ENCODE measurements at regions of chr2 and their contacts with region 1.

Region 1: GRCh38 chr2:71226965-71227560 is at the start of gene PAIP2B:
- DNase-seq: peak; percentile 99
- ATAC-seq: peak; percentile 93 to 97 (median 94)
- H3K4me3 ChIP-seq: peak within 1 kb of the TSS; percentile 90
- H3K27ac ChIP-seq: peak within 1 kb of the TSS; percentile 95
- H3K4me1 ChIP-seq: no peaks in the 10 kb centered on the region
- H3K27me3 ChIP-seq: no peaks in the 10 kb centered on the region
- CTCF ChIP-seq: no peak
- total RNA-seq, gene PAIP2B: 14.0 to 47.4 (median 36.9) TPM

Region 2: GRCh38 chr2:70901227-70902066 is 325.6 kb before region 1 on chr2:
- intact Hi-C with region 1: no loop called
- DNase-seq: no peak
- ATAC-seq: peak; percentile 36 to 53 (median 46)
- H3K4me3 ChIP-seq: peak overlapping the region; percentile 80
- H3K27ac ChIP-seq: no peak overlapping the region
- H3K4me1 ChIP-seq: peaks cover 14% of the 10 kb centered on the region
- H3K27me3 ChIP-seq: peaks cover 0 to 83% (median 24%) of the 10 kb centered on the region in 3 donors
- CTCF ChIP-seq: no peak

Region 3: GRCh38 chr2:71250945-71251344 is 23.9 kb after region 1 on chr2:
- intact Hi-C with region 1: no loop called
- DNase-seq: no peak
- ATAC-seq: no peak
- H3K4me3 ChIP-seq: no peak overlapping the region
- H3K27ac ChIP-seq: no peak overlapping the region
- H3K4me1 ChIP-seq: peaks cover 15% of the 10 kb centered on the region
- H3K27me3 ChIP-seq: no peaks in the 10 kb centered on the region
- CTCF ChIP-seq: no peak

Region 4: GRCh38 chr2:71276311-71277146 is 49.5 kb after region 1 on chr2:
- intact Hi-C with region 1: loop called (anchors 1 to 5 kb)
- DNase-seq: peak; percentile 90 to 95
- ATAC-seq: peak; percentile 94 to 99 (median 95)
- H3K4me3 ChIP-seq: peak overlapping the region; percentile 78
- H3K27ac ChIP-seq: peak overlapping the region; percentile 93
- H3K4me1 ChIP-seq: peaks cover 22% of the 10 kb centered on the region
- H3K27me3 ChIP-seq: no peaks in the 10 kb centered on the region
- CTCF ChIP-seq: no peak